Activated CD8-positive, alpha-beta T cell treated with anti-CD3 and anti-CD28 coated beads for 36 hours (primary cell): ENCODE measurements at regions of chr4 and their contacts with region 1.

Region 1: DNA sequence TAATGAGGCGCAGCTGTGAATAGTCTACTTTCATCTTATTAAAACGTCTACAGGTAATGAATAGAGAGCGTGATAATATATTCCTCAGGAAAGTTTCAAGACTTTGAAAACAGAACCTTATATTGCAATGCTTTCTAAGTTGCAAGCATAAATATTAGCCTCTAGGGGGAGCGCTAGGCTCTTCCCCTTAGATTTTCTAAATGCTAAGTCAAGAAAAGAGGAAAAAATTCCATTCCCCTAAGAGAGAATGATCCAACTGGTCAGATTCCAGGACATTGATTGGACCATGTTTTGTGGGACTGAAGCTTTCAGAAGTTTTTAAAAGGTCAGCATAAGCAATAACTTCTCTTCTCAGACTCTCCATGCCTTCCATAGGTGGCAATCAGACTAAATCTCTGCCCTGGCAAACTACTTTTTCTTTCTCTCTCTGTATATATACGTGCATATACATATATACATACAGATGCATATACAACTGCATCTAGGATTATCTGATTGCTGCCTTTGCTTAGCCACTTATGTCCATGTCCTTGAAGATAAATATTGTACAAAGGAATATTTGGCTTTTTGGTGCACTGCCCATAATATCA is 492.9 kb downstream of the INPP4B start:
- DNase-seq: no peak
- ATAC-seq: peak; percentile 34
- H3K4me3 Mint-ChIP-seq: no peak overlapping the region
- H3K27ac Mint-ChIP-seq: peak overlapping the region; percentile 84
- H3K4me1 Mint-ChIP-seq: peaks cover 94% of the 10 kb centered on the region
- H3K27me3 Mint-ChIP-seq: no peaks in the 10 kb centered on the region
- CTCF ChIP-seq: peak; percentile 96

Region 2: GRCh38 chr4:142243255-142243654 is 110.0 kb before region 1 on chr4:
- CTCF ChIA-PET with region 1: no interaction called
- POLR2A ChIA-PET with region 1: no interaction called
- intact Hi-C with region 1: no loop called
- DNase-seq: no peak
- ATAC-seq: no peak
- H3K4me3 Mint-ChIP-seq: no peak overlapping the region
- H3K27ac Mint-ChIP-seq: no peak overlapping the region
- H3K4me1 Mint-ChIP-seq: peaks cover 8% of the 10 kb centered on the region
- H3K27me3 Mint-ChIP-seq: no peaks in the 10 kb centered on the region
- CTCF ChIP-seq: no peak

Region 3: GRCh38 chr4:142282870-142283431 is 70.3 kb before region 1 on chr4:
- CTCF ChIA-PET with region 1: interaction called, 10 read pairs
- POLR2A ChIA-PET with region 1: no interaction called
- intact Hi-C with region 1: no loop called
- DNase-seq: peak; percentile 22
- ATAC-seq: peak; percentile 38
- H3K4me3 Mint-ChIP-seq: no peak overlapping the region
- H3K27ac Mint-ChIP-seq: no peak overlapping the region
- H3K4me1 Mint-ChIP-seq: peaks cover 18% of the 10 kb centered on the region
- H3K27me3 Mint-ChIP-seq: no peaks in the 10 kb centered on the region
- CTCF ChIP-seq: peak; percentile 93

Region 4: GRCh38 chr4:142366769-142367181 is 13.5 kb after region 1 on chr4:
- CTCF ChIA-PET with region 1: interaction called, 48 read pairs
- POLR2A ChIA-PET with region 1: interaction called, 4 read pairs
- intact Hi-C with region 1: no loop called
- DNase-seq: no peak
- ATAC-seq: peak; percentile 53
- H3K4me3 Mint-ChIP-seq: no peak overlapping the region
- H3K27ac Mint-ChIP-seq: peak overlapping the region; percentile 21
- H3K4me1 Mint-ChIP-seq: peaks cover 66% of the 10 kb centered on the region
- H3K27me3 Mint-ChIP-seq: no peaks in the 10 kb centered on the region
- CTCF ChIP-seq: no peak

Region 5: DNA sequence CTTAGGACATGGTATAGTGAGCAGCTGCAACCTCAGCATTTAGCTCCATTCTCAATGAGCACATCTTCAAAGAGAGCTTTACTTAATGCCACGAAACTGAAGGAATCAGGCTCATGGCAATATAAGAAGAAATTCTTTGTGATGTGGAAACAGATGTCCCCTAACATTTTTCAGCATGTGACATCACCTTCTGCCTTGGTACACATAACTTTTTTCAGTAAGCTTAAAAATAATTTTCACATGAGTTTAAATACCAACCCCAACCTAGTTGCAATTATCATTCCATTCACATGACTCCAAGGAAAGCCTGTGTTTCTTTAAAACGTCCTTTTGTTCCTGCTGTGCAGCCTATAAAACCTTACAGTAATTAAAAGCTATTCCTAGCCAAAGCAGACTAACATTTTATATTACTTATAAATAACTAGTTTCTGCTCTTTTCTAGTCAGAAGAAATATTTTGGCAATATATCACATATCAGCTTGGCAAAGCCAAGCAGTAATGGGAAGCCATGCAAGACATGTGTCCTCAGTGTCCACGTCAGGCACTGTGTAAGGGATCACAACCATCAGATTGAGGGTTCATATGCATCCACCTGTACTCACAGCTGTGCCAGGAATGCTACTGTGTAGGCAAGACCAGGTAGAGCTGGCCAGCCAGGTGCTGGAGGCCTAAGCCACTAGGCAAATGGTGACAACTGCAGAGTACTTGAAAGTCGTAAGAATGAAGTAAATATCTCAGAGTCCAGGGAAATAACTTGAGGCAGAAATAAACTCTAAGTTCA is 26.2 kb after region 1 on chr4:
- CTCF ChIA-PET with region 1: interaction called, 48 read pairs
- POLR2A ChIA-PET with region 1: interaction called, 7 read pairs
- intact Hi-C with region 1: no loop called
- DNase-seq: no peak
- ATAC-seq: no peak
- H3K4me3 Mint-ChIP-seq: no peak overlapping the region
- H3K27ac Mint-ChIP-seq: peak overlapping the region; percentile 94
- H3K4me1 Mint-ChIP-seq: peaks cover 73% of the 10 kb centered on the region
- H3K27me3 Mint-ChIP-seq: no peaks in the 10 kb centered on the region
- CTCF ChIP-seq: no peak

Region 6: DNA sequence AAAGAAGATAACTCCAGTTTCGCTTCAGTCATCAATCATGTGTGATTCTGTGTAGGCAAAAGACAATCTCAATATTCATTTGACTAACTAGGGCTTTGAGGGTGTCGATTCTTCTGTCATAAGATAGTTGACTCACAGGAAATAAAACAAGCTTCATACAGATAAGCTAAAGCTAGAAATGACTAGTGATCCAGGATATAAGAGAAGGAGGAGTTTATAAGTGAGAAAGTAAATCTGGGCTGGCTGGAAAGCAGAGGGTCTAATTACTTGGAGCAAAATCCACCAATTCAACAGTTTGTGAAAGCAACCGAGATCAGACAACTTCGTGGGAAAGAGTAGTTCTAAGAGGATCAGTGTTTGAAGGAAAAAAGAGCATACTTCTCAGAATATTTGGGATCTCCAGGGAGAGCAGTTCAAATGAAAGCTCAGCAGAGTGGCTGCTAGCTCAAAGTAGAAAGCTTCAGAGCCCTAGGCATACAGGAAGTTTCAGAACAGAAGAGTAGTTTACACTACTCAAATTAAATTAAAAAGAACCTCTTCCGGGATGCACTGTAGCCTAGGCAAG is 63.5 kb after region 1 on chr4:
- CTCF ChIA-PET with region 1: interaction called, 10 read pairs
- POLR2A ChIA-PET with region 1: interaction called, 7 read pairs
- intact Hi-C with region 1: no loop called
- DNase-seq: peak; percentile 29
- ATAC-seq: peak; percentile 90
- H3K4me3 Mint-ChIP-seq: peak overlapping the region; percentile 69
- H3K27ac Mint-ChIP-seq: peak overlapping the region; percentile 98
- H3K4me1 Mint-ChIP-seq: peaks cover 58% of the 10 kb centered on the region
- H3K27me3 Mint-ChIP-seq: no peaks in the 10 kb centered on the region
- CTCF ChIP-seq: no peak

Region 7: GRCh38 chr4:142447009-142447408 is 93.8 kb after region 1 on chr4:
- CTCF ChIA-PET with region 1: no interaction called
- POLR2A ChIA-PET with region 1: no interaction called
- intact Hi-C with region 1: no loop called
- DNase-seq: no peak
- ATAC-seq: no peak
- H3K4me3 Mint-ChIP-seq: no peak overlapping the region
- H3K27ac Mint-ChIP-seq: no peak overlapping the region
- H3K4me1 Mint-ChIP-seq: peaks cover 20% of the 10 kb centered on the region
- H3K27me3 Mint-ChIP-seq: no peaks in the 10 kb centered on the region
- CTCF ChIP-seq: no peak

Region 8: GRCh38 chr4:142846729-142847596 is 493.7 kb after region 1 on chr4:
- CTCF ChIA-PET with region 1: interaction called, 3 read pairs
- POLR2A ChIA-PET with region 1: no interaction called
- intact Hi-C with region 1: loop called (anchors 10 kb)
- DNase-seq: peak; percentile 83
- ATAC-seq: peak; percentile 84
- H3K4me3 Mint-ChIP-seq: peak overlapping the region; percentile 83
- H3K27ac Mint-ChIP-seq: no peak overlapping the region
- H3K4me1 Mint-ChIP-seq: peaks cover 5% of the 10 kb centered on the region
- H3K27me3 Mint-ChIP-seq: peaks cover 26% of the 10 kb centered on the region
- CTCF ChIP-seq: peak; percentile 62